ENCODE measurements at regions of chr3 and their contacts with region 1.

Region 1: DNA sequence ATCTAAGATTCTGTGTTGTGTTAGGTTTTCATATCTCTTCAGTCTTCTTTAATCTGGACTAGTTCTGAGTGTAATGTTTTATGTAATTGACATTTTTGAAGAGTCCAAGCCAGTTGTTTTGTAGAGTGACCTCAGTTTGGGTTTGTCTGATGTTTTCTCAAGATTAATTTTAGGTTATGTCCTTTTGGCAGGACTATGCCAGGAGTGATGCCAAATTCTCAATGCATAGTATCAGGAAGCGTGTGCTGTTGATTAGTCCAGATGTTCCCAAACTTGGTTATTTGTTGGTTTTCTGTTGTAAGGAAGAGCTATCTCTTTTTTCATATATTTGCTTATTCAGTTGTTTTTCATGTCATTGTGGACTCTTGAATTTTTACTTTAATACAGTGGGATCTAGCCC is 32.6 kb downstream of the NMD3 start:
- DNase-seq: no peak
- ATAC-seq: peak in 2 of 4 donors; percentile 14 to 18
- H3K4me3 ChIP-seq: no peak overlapping the region
- H3K27ac ChIP-seq: peak overlapping the region in 1 of 12 donors; percentile 4
- H3K4me1 ChIP-seq: peaks cover 0 to 26% (median 13%) of the 10 kb centered on the region in 12 donors
- H3K27me3 ChIP-seq: no peaks in the 10 kb centered on the region
- CTCF ChIP-seq: no peak
- POLR2A ChIP-seq: no peak

Region 2: GRCh38 chr3:161231861-161232260 is 21.9 kb before region 1 on chr3:
- intact Hi-C with region 1: loop called in 1 of 10 experiments (anchors 2 kb)
- DNase-seq: no peak
- ATAC-seq: peak in 3 of 4 donors; percentile 24 to 39 (median 32)
- H3K4me3 ChIP-seq: no peak overlapping the region
- H3K27ac ChIP-seq: no peak overlapping the region
- H3K4me1 ChIP-seq: peaks cover 0 to 25% (median 7%) of the 10 kb centered on the region in 12 donors
- H3K27me3 ChIP-seq: no peaks in the 10 kb centered on the region
- CTCF ChIP-seq: no peak
- POLR2A ChIP-seq: no peak